Activated T-helper 2 cell treated with anti-CD3 and anti-CD28 coated beads, Interferon-gamma antibody, Interleukin-2, Interleukin-4, amounts not matched to agents 10 μg/mL and 5 μg/mL and 100 μg/mL, durations not matched to agents 14 hours and 24 hours and 36 hours (primary cell): ENCODE measurements at regions of chr6 and their contacts with region 1.

Region 1: DNA sequence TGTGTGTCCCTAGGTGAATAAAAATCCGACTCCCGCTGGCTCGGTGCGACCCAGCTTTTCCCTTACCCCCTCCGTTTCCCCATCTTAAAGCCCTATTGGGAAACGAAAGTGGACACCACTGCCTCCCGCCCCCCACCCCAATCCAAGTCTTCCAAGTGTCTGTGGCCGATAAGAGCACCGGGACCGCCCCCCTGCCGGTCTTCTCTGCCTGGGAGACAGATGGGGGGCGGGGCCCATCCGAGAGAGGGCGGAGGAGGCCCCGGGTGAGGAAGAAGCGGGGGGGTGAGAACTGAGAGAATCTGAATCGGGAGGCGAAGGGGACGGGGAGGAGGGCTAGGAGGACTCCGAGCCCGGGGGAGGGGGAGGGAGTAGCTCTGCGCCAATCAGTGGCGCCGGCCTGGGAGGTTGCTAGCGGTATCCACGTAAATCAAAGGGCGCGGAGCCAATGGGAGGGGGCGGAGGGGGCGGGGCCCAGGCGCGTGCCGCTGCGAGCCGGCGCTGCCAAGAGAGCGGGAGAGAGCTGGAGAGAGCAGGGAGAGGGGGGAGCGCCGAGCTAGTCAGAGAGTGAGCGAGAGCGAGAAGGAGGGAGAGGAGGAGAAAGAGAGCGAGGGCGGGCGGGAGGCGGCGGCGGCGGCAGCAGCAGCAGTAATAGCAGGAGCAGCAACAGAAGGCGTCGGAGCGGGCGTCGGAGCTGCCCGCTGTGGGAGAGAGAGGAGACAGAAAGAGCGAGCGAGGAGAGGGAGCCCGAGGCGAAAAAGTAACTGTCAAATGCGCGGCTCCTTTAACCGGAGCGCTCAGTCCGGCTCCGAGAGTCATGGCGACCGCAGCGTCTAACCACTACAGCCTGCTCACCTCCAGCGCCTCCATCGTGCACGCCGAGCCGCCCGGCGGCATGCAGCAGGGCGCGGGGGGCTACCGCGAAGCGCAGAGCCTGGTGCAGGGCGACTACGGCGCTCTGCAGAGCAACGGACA is at the start of gene POU3F2:
- DNase-seq: peak; percentile 38
- H3K4me3 Mint-ChIP-seq: peak within 1 kb of the TSS; percentile 77
- H3K27ac Mint-ChIP-seq: no peak within 1 kb of the TSS
- H3K4me1 Mint-ChIP-seq: peaks cover 30% of the 10 kb centered on the region
- H3K27me3 Mint-ChIP-seq: peaks cover 76% of the 10 kb centered on the region
- total RNA-seq, gene POU3F2: not detected in 2 replicates

Region 2: GRCh38 chr6:98124171-98124570 is 710.2 kb before region 1 on chr6:
- intact Hi-C with region 1: no loop called
- DNase-seq: no peak
- H3K4me3 Mint-ChIP-seq: no peak overlapping the region
- H3K27ac Mint-ChIP-seq: no peak overlapping the region
- H3K4me1 Mint-ChIP-seq: no peaks in the 10 kb centered on the region
- H3K27me3 Mint-ChIP-seq: no peaks in the 10 kb centered on the region

Region 3: DNA sequence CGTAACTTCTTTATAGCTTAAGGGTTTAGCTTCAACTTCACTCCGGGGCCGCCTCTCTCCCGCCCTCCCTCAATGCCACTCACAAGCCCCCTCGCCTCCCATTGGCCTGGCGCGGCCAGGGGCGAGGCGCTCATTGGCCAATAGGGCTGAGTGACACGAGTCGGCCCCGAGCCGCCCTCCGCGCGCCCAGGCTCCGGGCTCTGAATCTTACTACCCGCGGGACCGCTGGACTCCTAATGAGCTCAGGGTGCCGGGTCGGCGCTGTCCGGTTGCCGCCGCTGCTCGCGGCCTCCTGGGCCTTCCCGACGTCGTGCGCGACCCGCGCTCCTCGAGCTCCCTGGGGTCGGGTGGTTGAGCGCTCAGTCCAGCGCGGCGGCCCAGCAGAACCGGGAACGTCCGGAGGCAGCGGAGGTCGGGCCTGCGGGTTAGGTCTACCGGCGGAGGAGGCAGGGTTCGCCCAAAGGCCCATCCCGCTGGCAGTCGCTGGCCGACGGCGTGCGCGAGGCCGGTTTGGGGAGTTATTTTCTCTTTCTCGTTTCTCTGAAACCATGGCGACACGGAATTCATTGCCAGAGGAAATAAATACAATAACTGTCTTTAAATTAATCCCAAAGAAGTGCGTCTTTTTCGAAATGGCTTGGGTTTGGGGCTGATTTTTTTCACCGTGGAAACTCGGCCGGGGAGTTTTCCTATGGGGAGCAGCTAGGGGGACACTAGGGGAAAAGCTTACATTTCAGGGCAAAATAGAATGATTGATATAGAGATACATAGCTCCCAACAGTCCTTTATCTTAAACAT is 1630.8 kb after region 1 on chr6 and contains the start of gene SIM1:
- intact Hi-C with region 1: loop called (anchors 2 kb)
- DNase-seq: no peak
- H3K4me3 Mint-ChIP-seq: no peak within 1 kb of the TSS
- H3K27ac Mint-ChIP-seq: no peak within 1 kb of the TSS
- H3K4me1 Mint-ChIP-seq: peaks cover 25% of the 10 kb centered on the region
- H3K27me3 Mint-ChIP-seq: peaks cover 89% of the 10 kb centered on the region
- total RNA-seq, gene SIM1: 0.02 TPM in 1 of 2 replicates, not detected in the other